Activated B cell treated with CpG ODN at 0.5 μM for 24 hours (primary cell): ENCODE measurements at regions of chr3 and their contacts with region 1.

Region 1: GRCh38 chr3:114447545-114447944 is 153.7 kb downstream of the TIGIT start:
- DNase-seq: no peak
- ATAC-seq: no peak
- H3K4me3 Mint-ChIP-seq: peak overlapping the region; percentile 41
- H3K27ac Mint-ChIP-seq: peak overlapping the region; percentile 71
- H3K4me1 Mint-ChIP-seq: peaks cover 69% of the 10 kb centered on the region
- H3K27me3 Mint-ChIP-seq: no peaks in the 10 kb centered on the region
- CTCF ChIP-seq: no peak

Region 2: GRCh38 chr3:114435386-114436115 is 12.0 kb before region 1 on chr3:
- CTCF ChIA-PET with region 1: interaction called, 4 read pairs
- POLR2A ChIA-PET with region 1: interaction called, 24 read pairs
- intact Hi-C with region 1: loop called (anchors 1 kb)
- DNase-seq: no peak
- ATAC-seq: no peak
- H3K4me3 Mint-ChIP-seq: peak overlapping the region; percentile 8
- H3K27ac Mint-ChIP-seq: peak overlapping the region; percentile 77
- H3K4me1 Mint-ChIP-seq: peaks cover 62% of the 10 kb centered on the region
- H3K27me3 Mint-ChIP-seq: no peaks in the 10 kb centered on the region
- CTCF ChIP-seq: no peak

Region 3: GRCh38 chr3:114484919-114485318 is 37.4 kb after region 1 on chr3:
- CTCF ChIA-PET with region 1: no interaction called
- POLR2A ChIA-PET with region 1: no interaction called
- intact Hi-C with region 1: no loop called
- DNase-seq: no peak
- ATAC-seq: no peak
- H3K4me3 Mint-ChIP-seq: no peak overlapping the region
- H3K27ac Mint-ChIP-seq: no peak overlapping the region
- H3K4me1 Mint-ChIP-seq: peaks cover 10% of the 10 kb centered on the region
- H3K27me3 Mint-ChIP-seq: no peaks in the 10 kb centered on the region
- CTCF ChIP-seq: no peak

Region 4: GRCh38 chr3:116354382-116354781 is 1906.8 kb after region 1 on chr3:
- CTCF ChIA-PET with region 1: no interaction called
- POLR2A ChIA-PET with region 1: no interaction called
- intact Hi-C with region 1: no loop called
- DNase-seq: no peak
- ATAC-seq: no peak
- H3K4me3 Mint-ChIP-seq: no peak overlapping the region
- H3K27ac Mint-ChIP-seq: no peak overlapping the region
- H3K4me1 Mint-ChIP-seq: no peaks in the 10 kb centered on the region
- H3K27me3 Mint-ChIP-seq: no peaks in the 10 kb centered on the region
- CTCF ChIP-seq: no peak